ENCODE measurements at regions of chr19 and their contacts with region 1.

Region 1: DNA sequence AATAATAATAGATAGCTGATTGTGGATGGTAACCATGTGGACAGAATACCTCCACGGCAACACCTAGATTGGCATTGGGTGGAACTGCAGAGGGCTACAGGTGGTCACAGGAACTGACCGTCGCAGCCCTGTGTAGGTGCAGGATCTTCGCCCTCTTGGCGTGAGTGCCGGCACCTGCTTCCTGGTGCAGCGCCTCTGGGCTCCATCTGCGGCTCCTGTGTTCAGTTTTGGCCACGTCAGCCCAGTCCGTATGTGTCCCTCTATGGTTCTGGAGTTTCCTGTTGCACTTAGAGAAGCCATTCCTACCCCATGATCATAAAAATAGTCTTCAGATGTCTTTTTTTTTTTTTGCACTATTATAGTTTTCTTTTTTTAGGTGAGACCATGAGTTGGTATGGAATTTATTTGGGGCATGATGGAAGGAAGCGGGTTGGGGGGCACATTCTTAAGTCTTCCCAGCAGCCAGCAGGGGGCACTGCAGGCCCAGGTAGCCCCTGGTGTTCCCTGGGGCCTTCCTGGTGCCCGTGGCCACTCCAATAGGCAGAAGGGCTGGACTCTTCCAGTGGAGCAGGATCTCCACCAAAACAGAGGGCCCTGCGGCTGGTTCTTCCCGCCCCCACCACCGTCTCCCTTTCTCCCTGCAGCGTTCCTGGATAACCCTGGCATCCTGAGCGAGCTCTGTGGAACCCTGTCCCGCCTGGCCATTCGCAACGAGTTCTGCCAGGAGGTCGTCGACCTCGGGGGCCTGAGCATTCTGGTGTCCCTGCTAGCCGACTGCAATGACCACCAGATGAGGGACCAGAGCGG is 10.1 kb upstream of the SLC25A42 start:
- DNase-seq: peak; percentile 32 to 83 (median 62)
- ATAC-seq: peak; percentile 75 to 94 (median 82)
- H3K4me3 ChIP-seq: no peak overlapping the region
- H3K27ac ChIP-seq: no peak overlapping the region
- H3K4me1 ChIP-seq: no peaks in the 10 kb centered on the region
- H3K27me3 ChIP-seq: no peaks in the 10 kb centered on the region
- CTCF ChIP-seq: peak; percentile 22 to 66 (median 39)

Region 2: DNA sequence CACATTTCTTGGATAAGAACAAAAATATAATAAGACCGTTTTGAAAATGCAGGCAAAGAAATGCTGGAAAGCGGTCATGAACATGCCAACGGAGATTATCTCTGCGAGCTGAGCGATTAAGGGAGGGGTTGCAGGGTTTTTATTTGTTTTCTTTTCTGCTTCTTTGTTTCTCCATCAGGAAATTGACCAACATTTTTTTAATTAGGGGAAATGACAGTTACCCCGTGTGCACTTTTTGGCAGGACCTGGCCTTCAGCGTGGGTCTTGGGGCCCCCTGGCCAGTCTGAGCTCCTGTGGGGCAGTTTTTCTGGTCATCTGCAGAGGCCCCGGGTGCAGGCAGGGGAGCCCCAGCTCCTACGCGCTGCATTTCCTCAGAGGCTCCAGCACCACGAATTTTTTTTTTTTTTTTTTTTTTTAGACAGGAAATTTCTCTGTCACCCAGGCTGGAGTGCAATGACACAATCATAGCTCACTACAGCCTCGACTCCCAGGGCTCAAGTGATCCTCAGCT is 81.4 kb before region 1 on chr19:
- intact Hi-C with region 1: no loop called
- DNase-seq: no peak
- ATAC-seq: peak in 3 of 4 donors; percentile 17 to 44 (median 22)
- H3K4me3 ChIP-seq: no peak overlapping the region
- H3K27ac ChIP-seq: peak overlapping the region in 2 of 4 donors; percentile 54 to 57
- H3K4me1 ChIP-seq: peaks cover 0 to 4% (median 0%) of the 10 kb centered on the region in 3 donors
- H3K27me3 ChIP-seq: no peaks in the 10 kb centered on the region
- CTCF ChIP-seq: no peak

Region 3: DNA sequence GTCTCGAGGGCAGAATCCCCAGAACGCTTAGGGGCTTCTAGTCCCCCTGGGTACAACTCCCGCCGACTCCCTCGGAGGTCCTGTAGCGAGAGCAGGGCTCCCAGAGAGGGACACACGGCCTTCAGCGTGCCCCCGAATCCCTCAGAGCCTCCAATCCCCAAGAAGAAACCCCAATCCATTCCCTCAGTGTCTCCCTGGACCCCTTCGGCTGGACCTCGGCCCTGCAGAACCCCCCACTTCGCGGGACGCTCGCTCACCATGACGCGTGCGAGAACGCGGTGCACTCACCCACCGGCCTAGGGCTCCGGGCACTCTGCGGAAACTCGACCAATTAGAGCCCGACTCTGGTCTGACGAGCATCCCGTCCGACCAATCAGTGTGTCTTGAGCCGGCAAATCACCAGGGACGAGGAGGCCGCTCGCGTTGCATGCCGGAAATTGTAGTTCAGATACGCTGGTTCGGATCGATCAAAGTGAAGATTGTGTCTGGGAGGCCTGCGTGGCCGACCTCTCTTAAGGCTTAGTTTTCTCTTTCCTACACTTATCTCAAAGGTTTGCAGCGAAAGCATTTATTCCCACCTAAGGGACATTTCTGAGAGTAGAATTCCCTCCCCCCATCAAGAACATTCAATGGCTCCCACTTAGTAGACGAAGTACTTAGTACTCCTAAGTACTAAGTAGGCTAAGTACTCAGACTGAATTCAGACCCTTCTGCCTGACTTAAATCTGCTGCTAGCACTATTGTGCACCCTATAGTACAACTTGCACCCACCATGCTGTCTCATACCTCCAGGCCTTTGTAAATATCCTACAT is 84.7 kb after region 1 on chr19 and contains the start of gene TMEM161A:
- intact Hi-C with region 1: loop called in 2 of 3 experiments (anchors 5 to 10 kb)
- DNase-seq: peak; percentile 92 to 99 (median 98)
- ATAC-seq: peak; percentile 98 to 100 (median 99)
- H3K4me3 ChIP-seq: peak within 1 kb of the TSS; percentile 46 to 63 (median 61)
- H3K27ac ChIP-seq: peak within 1 kb of the TSS in 3 of 4 donors; percentile 31 to 50 (median 49)
- H3K4me1 ChIP-seq: peaks cover 0 to 6% (median 0%) of the 10 kb centered on the region in 3 donors
- H3K27me3 ChIP-seq: no peaks in the 10 kb centered on the region
- CTCF ChIP-seq: no peak
- total RNA-seq, gene TMEM161A: 10.5 to 14.6 (median 11.7) TPM

Measured in pancreas (tissue), 10 donors.